BJ (cell line): ENCODE measurements at regions of chr3 and their contacts with region 1.

Region 1: GRCh38 chr3:158845765-158846350 is 44.0 kb downstream of the MFSD1 start:
- DNase-seq: no peak
- H3K4me3 ChIP-seq: no peak overlapping the region
- H3K27me3 ChIP-seq: no peaks in the 10 kb centered on the region
- CTCF ChIP-seq: peak; percentile 67

Region 2: DNA sequence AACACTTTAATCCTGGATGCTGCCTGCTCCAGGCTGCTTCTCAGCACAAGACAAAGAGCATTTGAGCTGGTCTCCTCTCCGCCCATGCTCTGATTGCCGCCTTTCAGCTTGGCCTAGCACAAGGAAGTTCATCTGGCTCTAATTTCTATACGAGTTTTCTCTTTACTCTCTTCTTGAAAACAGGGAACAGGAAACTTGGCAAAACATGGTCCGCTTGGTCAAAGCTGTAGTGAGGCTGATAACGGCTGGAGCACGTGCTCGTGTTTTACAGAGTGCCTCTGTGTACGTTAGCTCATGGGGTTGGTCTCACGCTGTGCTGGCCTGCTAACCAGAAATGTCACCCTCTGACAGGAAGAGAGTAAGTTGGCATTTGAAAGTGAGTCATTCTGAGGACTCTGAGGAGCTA is 132.8 kb before region 1 on chr3:
- CTCF ChIA-PET with region 1: no interaction called
- POLR2A ChIA-PET with region 1: no interaction called
- DNase-seq: no peak
- H3K4me3 ChIP-seq: no peak overlapping the region
- H3K27me3 ChIP-seq: no peaks in the 10 kb centered on the region
- CTCF ChIP-seq: no peak

Region 3: GRCh38 chr3:159266779-159267178 is 420.9 kb after region 1 on chr3:
- CTCF ChIA-PET with region 1: interaction called, 144 read pairs
- POLR2A ChIA-PET with region 1: no interaction called
- DNase-seq: no peak
- H3K4me3 ChIP-seq: no peak overlapping the region
- H3K27me3 ChIP-seq: peaks cover 3% of the 10 kb centered on the region; the same call in 1 of the 2 replicates
- CTCF ChIP-seq: peak; percentile 27